H1 (cell line): ENCODE measurements at regions of chr17 and their contacts with region 1.

Region 1: GRCh38 chr17:19338031-19338990 is 24.2 kb downstream of the B9D1 start:
- DNase-seq: peak; percentile 47 to 75
- H3K4me3 ChIP-seq: no peak overlapping the region
- H3K27ac ChIP-seq: no peak overlapping the region
- H3K4me1 ChIP-seq: peaks cover 4 to 25% (median 15%) of the 10 kb centered on the region in 4 experiments
- H3K27me3 ChIP-seq: no peaks in the 10 kb centered on the region
- CTCF ChIP-seq: peak; percentile 67 to 96 (median 71)
- EP300 ChIP-seq: no peak
- POLR2A ChIP-seq: no peak
- RAD21 ChIP-seq: peak; percentile 46 to 62

Region 2: DNA sequence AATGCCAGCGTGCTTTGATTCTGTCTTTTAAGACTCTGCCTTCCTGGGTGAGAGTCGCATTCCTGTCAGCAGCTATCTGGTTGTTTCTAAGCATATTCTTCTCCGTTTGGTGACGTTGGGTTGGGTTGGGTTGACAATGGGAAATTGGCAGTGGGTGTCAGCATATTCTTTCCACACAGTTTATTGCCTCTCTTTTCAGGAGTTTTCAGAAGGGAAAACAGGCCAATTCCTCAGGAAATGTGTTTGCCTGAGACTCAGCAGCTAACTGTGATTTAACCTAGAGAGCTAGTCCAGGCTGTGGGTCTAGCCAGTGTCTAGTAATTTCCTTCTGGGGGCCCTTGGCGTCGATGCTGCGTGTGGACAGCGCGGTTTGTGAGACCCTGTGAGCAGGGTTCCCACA is 79.9 kb before region 1 on chr17:
- CTCF ChIA-PET with region 1: no interaction called
- POLR2A ChIA-PET with region 1: no interaction called
- DNase-seq: no peak
- H3K4me3 ChIP-seq: no peak overlapping the region
- H3K27ac ChIP-seq: no peak overlapping the region
- H3K4me1 ChIP-seq: peaks cover 0 to 8% (median under 1%) of the 10 kb centered on the region in 4 experiments; a peak in 3 of 7 replicates
- H3K27me3 ChIP-seq: no peaks in the 10 kb centered on the region
- CTCF ChIP-seq: no peak
- EP300 ChIP-seq: no peak
- POLR2A ChIP-seq: no peak
- RAD21 ChIP-seq: no peak

Region 3: GRCh38 chr17:19327039-19327776 is 11.1 kb before region 1 on chr17:
- CTCF ChIA-PET with region 1: interaction called, 70 read pairs
- POLR2A ChIA-PET with region 1: interaction called, 5 read pairs
- DNase-seq: no peak
- H3K4me3 ChIP-seq: no peak overlapping the region
- H3K27ac ChIP-seq: no peak overlapping the region
- H3K4me1 ChIP-seq: 0 out of 7 replicates have a peak, but pooled peaks cover 0 to 3% (median 0%) of the 10 kb centered on the region in 4 experiments
- H3K27me3 ChIP-seq: no peaks in the 10 kb centered on the region
- CTCF ChIP-seq: no peak
- EP300 ChIP-seq: no peak
- POLR2A ChIP-seq: no peak
- RAD21 ChIP-seq: no peak